OCI-LY7 (cell line): ENCODE measurements at regions of chr5 and their contacts with region 1.

Region 1: GRCh38 chr5:96729156-96729555 is 67.0 kb downstream of the CAST start:
- DNase-seq: no peak
- H3K4me3 ChIP-seq: no peak overlapping the region
- H3K27ac ChIP-seq: no peak overlapping the region
- H3K4me1 ChIP-seq: peaks cover 4% of the 10 kb centered on the region
- CTCF ChIP-seq: peak; percentile 72

Region 2: DNA sequence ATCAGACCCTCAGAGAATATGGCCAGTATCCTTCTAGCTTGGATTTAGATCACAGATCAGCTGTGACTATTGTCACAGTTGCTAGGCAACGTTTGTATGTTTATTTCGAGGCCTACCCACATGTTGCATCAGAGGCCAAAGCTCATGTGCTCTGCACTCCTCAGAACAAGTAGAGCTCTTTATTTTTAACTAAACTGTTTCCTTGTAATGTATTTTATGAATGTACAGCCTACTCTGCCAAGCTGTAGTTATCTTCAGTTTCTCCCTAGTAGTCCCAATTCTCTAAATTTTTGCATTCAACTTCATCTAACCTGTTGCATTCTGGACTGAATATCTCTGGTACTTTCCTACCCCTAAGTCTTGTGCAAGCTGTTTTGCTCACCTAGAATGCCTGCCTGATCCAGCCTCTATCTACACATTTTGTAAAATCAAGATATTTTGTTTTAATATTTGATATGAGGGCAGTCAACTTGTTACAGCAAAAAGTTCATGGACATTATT is 14.2 kb before region 1 on chr5:
- CTCF ChIA-PET with region 1: no interaction called
- POLR2A ChIA-PET with region 1: interaction called, 15 read pairs
- intact Hi-C with region 1: no loop called
- DNase-seq: peak; percentile 7
- H3K4me3 ChIP-seq: no peak overlapping the region
- H3K27ac ChIP-seq: no peak overlapping the region
- H3K4me1 ChIP-seq: no peaks in the 10 kb centered on the region
- CTCF ChIP-seq: no peak